ENCODE measurements at regions of chr2 and their contacts with region 1.

Region 1: GRCh38 chr2:169727065-169727464 is 6.6 kb upstream of the KLHL23 start:
- DNase-seq: no peak
- ATAC-seq: no peak
- H3K4me3 ChIP-seq: no peak overlapping the region
- H3K27ac ChIP-seq: no peak overlapping the region
- H3K4me1 ChIP-seq: no peaks in the 10 kb centered on the region
- H3K27me3 ChIP-seq: no peaks in the 10 kb centered on the region
- CTCF ChIP-seq: no peak

Region 2: GRCh38 chr2:169485650-169486138 is 241.4 kb before region 1 on chr2:
- CTCF ChIA-PET with region 1: no interaction called
- POLR2A ChIA-PET with region 1: no interaction called
- in situ Hi-C with region 1: no loop called
- intact Hi-C with region 1: no loop called
- DNase-seq: no peak
- ATAC-seq: no peak
- H3K4me3 ChIP-seq: no peak overlapping the region
- H3K27ac ChIP-seq: no peak overlapping the region
- H3K4me1 ChIP-seq: no peaks in the 10 kb centered on the region
- H3K27me3 ChIP-seq: no peaks in the 10 kb centered on the region
- CTCF ChIP-seq: no peak

Region 3: DNA sequence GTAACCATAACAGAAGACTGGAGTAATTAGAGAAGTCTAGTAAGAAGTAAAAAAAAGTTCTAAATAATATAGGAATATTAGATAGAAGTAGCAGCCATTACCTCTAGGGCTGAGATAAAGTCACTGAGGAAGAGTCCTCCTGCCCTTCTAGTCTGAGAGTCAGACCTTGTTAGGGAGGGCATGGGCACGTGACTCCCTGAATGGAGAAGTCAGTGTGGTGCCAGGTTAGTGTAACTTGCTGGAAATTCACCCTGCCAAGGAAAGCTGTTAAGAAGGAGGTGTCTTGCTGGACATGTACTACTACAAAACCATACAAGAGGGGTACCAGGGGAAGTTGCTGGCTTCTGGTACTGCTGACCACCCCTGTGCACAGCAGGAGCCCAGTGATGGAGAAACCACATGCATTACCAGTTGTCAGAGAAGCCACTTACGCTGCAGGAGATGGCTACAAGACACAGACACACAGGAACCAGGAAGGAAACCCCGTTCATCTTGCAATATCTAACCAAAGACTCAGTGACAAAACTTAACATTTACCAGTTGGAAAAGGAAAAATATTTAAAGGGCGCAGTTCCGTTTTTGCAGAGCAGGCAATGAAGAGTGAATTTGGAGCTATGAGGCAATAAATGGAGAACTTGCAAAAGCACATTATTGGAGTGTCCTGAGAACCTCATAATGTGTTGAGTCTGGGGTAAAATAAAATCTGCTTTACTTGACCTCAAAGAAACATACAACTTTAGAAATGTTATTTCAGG is 1510.9 kb after region 1 on chr2:
- CTCF ChIA-PET with region 1: no interaction called
- POLR2A ChIA-PET with region 1: interaction called, 12 read pairs
- in situ Hi-C with region 1: no loop called
- intact Hi-C with region 1: no loop called
- DNase-seq: no peak
- ATAC-seq: no peak
- H3K4me3 ChIP-seq: no peak overlapping the region
- H3K27ac ChIP-seq: no peak overlapping the region
- H3K4me1 ChIP-seq: no peaks in the 10 kb centered on the region
- H3K27me3 ChIP-seq: no peaks in the 10 kb centered on the region
- CTCF ChIP-seq: no peak

Measured in Panc1 (cell line).